KBM-7 (cell line): ENCODE measurements at regions of chr17 and their contacts with region 1.

Region 1: DNA sequence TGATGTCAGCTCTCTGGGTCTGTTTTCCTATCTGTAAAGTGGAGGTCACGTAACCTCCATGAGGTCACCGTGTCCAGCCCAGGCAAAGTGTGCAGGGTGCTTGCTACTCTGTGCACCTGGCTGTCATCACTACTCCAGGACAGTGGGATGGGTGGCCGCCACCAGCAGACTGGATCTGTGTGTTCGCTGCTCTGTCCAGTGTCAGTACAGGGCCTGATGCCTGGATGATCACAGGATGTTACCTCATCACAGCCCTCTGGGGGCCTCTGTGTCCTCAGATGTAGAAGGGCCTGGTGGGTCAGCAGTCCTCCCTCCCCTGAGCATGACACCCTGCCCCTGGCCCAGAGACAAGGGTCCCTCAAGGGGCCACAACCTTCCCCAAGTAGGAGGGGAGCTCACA is 80.0 kb downstream of the KCNJ18 start:
- DNase-seq: no peak

Region 2: DNA sequence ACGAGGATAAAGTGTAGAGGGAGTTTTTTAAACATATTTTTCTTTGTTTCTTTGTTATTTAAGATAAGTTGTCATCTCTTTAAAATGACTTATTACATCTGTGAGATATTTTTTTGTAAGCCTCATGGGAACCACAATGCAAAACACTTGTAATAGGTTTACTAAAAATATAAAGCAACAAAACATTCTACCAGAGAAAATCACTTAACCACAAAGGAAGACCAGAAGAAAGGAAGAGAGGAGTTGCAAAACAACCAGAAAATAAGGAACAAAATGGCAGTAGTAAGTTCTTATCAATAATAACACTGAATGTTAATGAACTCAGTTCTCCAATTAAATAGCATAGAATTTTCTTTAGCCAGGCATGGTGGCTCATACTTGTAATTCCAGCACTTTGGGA is 622.7 kb before region 1 on chr17:
- in situ Hi-C with region 1: no loop called
- DNase-seq: peak; percentile 14

Region 3: DNA sequence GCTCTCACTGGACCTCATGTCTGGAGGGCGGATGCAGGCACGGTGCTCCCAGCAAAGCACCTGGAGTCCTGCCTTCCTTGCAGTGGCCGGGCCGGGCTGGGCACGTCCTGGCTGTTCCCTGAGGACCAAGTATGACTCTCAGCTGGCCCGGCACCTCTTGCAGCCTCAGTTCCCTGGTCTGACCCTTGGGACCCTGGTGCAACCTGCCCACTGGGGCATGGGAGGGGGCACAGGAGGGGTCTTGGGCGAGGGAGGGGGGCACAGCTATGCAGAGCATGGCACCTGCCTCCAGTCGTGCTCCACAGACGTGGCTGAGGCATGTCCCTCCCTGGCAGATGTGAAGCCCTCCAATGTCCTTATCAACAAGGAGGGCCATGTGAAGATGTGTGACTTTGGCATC is 468.2 kb before region 1 on chr17:
- in situ Hi-C with region 1: loop called (anchors 25 kb)
- DNase-seq: no peak